H1 (cell line): ENCODE measurements at regions of chr18 and their contacts with region 1.

Region 1: DNA sequence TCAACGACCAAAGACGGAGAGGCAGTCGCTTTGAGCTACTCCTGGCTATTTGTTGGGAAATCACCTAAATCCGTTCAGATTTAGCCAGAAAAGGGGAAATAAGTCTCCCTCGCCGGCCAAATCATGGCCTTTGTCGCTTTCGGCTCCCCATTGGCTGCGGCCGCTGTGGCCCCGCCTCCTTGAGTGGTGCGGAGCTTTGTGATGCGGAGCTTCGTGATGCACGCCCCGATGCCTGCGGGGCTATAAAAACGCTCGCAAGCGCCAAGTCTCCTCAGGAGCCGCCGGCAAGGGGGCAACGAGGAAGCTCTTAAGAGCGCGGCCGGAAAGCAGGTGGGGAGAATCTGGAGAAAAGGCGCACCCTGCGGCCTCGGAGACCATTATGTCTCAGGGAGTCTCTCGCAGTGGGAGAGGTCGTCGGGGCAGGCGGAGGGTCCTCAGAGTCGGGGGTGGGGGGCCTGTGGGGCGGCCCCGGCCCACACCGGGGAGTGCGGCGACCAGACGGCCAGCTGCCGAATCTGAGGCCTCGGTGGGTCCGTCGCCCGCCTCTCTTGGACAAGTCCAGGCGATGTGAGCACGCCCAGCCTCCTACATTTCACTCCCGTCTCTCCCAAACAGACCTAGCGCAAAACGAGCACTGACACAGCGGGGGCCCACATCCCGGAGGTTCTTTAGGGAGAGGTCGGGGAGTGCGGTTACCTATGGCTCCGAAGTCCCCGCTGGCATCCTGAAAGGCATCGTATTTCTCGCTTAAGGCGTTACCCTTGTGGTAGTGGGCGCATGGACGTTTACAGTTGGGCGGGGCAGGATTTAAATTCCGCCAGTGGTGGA is at the start of gene CABYR:
- DNase-seq: peak; percentile 93 to 96
- H3K4me3 ChIP-seq: peak within 1 kb of the TSS; percentile 51 to 75 (median 60)
- H3K27ac ChIP-seq: peak within 1 kb of the TSS; percentile 44; the same call in 1 of the 2 replicates
- H3K4me1 ChIP-seq: peaks cover 0 to 12% (median 7%) of the 10 kb centered on the region in 4 experiments; a peak in 5 of 7 replicates
- H3K27me3 ChIP-seq: no peaks in the 10 kb centered on the region
- CTCF ChIP-seq: no peak
- EP300 ChIP-seq: no peak
- POLR2A ChIP-seq: peak; percentile 100
- RAD21 ChIP-seq: no peak
- total RNA-seq, gene CABYR: 18.8 and 20.1 TPM in 2 replicates

Region 2: GRCh38 chr18:24118750-24119577 is 20.0 kb before region 1 on chr18:
- CTCF ChIA-PET with region 1: interaction called, 3 read pairs
- POLR2A ChIA-PET with region 1: interaction called, 19 read pairs
- DNase-seq: peak in 1 of 2 experiments; percentile 76
- H3K4me3 ChIP-seq: no peak overlapping the region
- H3K27ac ChIP-seq: no peak overlapping the region
- H3K4me1 ChIP-seq: no peaks in the 10 kb centered on the region
- H3K27me3 ChIP-seq: no peaks in the 10 kb centered on the region
- CTCF ChIP-seq: peak in 2 of 3 experiments; percentile 59 to 75; a peak in 3 of 4 replicates
- EP300 ChIP-seq: no peak
- POLR2A ChIP-seq: no peak
- RAD21 ChIP-seq: peak; percentile 85 to 87

Region 3: GRCh38 chr18:24168501-24168900 is 29.5 kb after region 1 on chr18:
- CTCF ChIA-PET with region 1: no interaction called
- POLR2A ChIA-PET with region 1: interaction called, 10 read pairs
- DNase-seq: no peak
- H3K4me3 ChIP-seq: no peak overlapping the region
- H3K27ac ChIP-seq: no peak overlapping the region
- H3K4me1 ChIP-seq: no peaks in the 10 kb centered on the region
- H3K27me3 ChIP-seq: no peaks in the 10 kb centered on the region
- CTCF ChIP-seq: no peak
- EP300 ChIP-seq: no peak
- POLR2A ChIP-seq: no peak
- RAD21 ChIP-seq: no peak

Region 4: GRCh38 chr18:24198461-24198860 is 59.5 kb after region 1 on chr18:
- CTCF ChIA-PET with region 1: no interaction called
- POLR2A ChIA-PET with region 1: no interaction called
- DNase-seq: no peak
- H3K4me3 ChIP-seq: no peak overlapping the region
- H3K27ac ChIP-seq: no peak overlapping the region
- H3K4me1 ChIP-seq: no peaks in the 10 kb centered on the region; a peak in 1 of 7 replicates
- H3K27me3 ChIP-seq: no peaks in the 10 kb centered on the region
- CTCF ChIP-seq: no peak
- EP300 ChIP-seq: no peak
- POLR2A ChIP-seq: no peak
- RAD21 ChIP-seq: no peak; a peak in 1 of 4 replicates

Region 5: DNA sequence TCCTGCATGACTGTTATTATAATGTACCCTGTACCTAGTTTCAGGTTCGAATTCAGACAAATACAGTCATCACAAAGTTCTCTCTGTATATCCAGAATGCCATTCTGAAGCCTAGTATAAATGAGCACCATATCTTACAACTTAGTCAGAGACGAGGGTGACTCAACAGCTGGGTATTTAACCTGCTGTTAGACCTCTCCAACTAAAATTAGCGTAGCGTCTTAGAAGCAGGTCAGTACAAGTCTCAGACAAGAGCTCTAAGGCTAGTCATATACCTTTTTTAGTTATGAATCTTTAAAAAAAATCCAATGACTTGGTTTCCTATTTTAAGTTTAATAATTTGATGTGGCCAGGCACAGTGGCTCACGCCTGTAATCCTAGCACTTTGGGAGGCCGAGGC is 73.9 kb after region 1 on chr18:
- CTCF ChIA-PET with region 1: no interaction called
- POLR2A ChIA-PET with region 1: no interaction called
- DNase-seq: no peak
- H3K4me3 ChIP-seq: no peak overlapping the region
- H3K27ac ChIP-seq: no peak overlapping the region
- H3K4me1 ChIP-seq: peaks cover 0 to 5% (median 3%) of the 10 kb centered on the region in 4 experiments; a peak in 6 of 7 replicates
- H3K27me3 ChIP-seq: no peaks in the 10 kb centered on the region
- CTCF ChIP-seq: no peak
- EP300 ChIP-seq: no peak
- POLR2A ChIP-seq: no peak
- RAD21 ChIP-seq: no peak

Region 6: GRCh38 chr18:24271381-24272331 is 132.7 kb after region 1 on chr18:
- CTCF ChIA-PET with region 1: no interaction called
- POLR2A ChIA-PET with region 1: interaction called, 11 read pairs
- DNase-seq: peak; percentile 66 to 84
- H3K4me3 ChIP-seq: peak overlapping the region; percentile 75 to 90 (median 84)
- H3K27ac ChIP-seq: peak overlapping the region; percentile 50; the same call in 1 of the 2 replicates
- H3K4me1 ChIP-seq: peaks cover 0 to 8% (median 4%) of the 10 kb centered on the region in 4 experiments; a peak in 4 of 7 replicates
- H3K27me3 ChIP-seq: no peaks in the 10 kb centered on the region
- CTCF ChIP-seq: peak; percentile 20 to 38 (median 31); a peak in 3 of 4 replicates
- EP300 ChIP-seq: no peak
- POLR2A ChIP-seq: peak in 1 of 2 experiments; percentile 58; a peak in 1 of 3 replicates
- RAD21 ChIP-seq: peak; percentile 27 to 35; a peak in 1 of 4 replicates